Ascending aorta (tissue), 2 donors: ENCODE measurements at regions of chr7 and their contacts with region 1.

Region 1: DNA sequence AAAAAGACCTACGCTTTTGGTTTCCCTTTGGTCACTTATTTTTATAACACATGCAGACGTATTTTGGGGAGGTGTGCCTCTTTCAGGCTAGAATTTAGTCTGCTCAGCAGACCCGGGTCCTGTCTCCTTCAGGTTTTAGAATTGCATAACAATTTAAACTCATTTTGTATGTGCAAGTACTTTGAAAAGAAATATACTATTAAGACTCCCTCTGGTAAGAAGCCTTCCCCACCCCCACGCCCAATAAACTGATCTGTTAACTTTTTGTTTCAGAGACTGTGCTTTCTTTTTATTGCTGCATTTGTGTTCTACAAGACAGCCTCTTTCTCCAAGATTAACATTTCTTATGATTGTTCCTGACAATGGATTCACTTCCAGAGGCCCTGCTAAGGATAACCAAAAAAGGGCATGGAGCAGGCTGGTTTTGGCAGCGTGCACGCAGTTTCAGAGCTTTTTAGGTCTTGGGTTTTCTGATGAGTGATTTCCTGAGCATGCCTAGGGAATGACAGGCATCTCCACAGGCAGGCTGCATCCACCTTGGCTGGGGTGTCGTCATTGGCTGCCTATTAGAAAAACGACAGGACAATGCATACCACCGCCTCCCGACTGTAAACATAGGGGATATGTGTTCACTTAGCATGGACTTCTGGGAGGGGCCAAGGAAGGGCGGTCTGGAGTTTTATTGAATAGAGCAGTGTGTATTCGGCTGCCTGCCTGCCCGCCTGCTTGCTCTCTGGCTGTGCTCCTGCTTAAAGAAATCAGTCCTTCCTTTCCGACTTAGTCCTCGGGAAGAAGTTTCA is at the start of gene CALD1:
- DNase-seq: peak; percentile 74 to 97
- H3K4me3 ChIP-seq: peak within 1 kb of the TSS; percentile 69 to 73
- H3K27ac ChIP-seq: peak within 1 kb of the TSS; percentile 82 to 94
- H3K4me1 ChIP-seq: peaks cover 4 to 15% of the 10 kb centered on the region in 2 donors
- H3K27me3 ChIP-seq: no peaks in the 10 kb centered on the region
- CTCF ChIP-seq: no peak
- total RNA-seq, gene CALD1: 352 TPM

Region 2: DNA sequence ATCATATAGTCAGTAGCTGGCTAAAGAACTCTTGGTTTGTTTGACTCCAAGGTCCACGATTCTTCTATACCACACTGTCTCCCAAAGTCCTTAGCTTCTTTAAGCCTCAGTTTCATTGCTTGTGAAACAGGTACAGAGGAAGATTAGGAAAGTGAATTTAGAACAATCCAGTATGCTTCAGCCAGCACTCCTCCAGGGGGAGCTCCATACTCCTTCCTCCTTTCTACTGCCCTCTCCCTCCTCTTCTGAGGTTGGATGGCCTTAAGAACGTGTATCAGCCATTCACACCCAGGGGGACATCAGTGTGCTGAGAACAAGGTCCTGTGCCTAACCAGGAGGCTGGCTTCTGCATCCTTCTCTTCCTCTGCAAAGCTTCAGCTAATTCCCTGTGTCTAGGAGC is 54.5 kb before region 1 on chr7:
- intact Hi-C with region 1: loop called (anchors 5 kb)
- DNase-seq: no peak
- H3K4me3 ChIP-seq: no peak overlapping the region
- H3K27ac ChIP-seq: peak overlapping the region; percentile 24 to 71
- H3K4me1 ChIP-seq: peaks cover 7 to 56% of the 10 kb centered on the region in 2 donors
- H3K27me3 ChIP-seq: no peaks in the 10 kb centered on the region
- CTCF ChIP-seq: peak; percentile 11 to 43 (median 13)

Region 3: GRCh38 chr7:134730411-134730829 is 48.7 kb before region 1 on chr7:
- intact Hi-C with region 1: loop called (anchors 2 kb)
- DNase-seq: no peak
- H3K4me3 ChIP-seq: peak overlapping the region in 1 of 2 donors; percentile 19
- H3K27ac ChIP-seq: peak overlapping the region; percentile 88 to 92
- H3K4me1 ChIP-seq: peaks cover 9 to 42% of the 10 kb centered on the region in 2 donors
- H3K27me3 ChIP-seq: no peaks in the 10 kb centered on the region
- CTCF ChIP-seq: no peak

Region 4: GRCh38 chr7:134811765-134812164 is 32.6 kb after region 1 on chr7:
- intact Hi-C with region 1: no loop called
- DNase-seq: no peak
- H3K4me3 ChIP-seq: no peak overlapping the region
- H3K27ac ChIP-seq: peak overlapping the region; percentile 76 to 79
- H3K4me1 ChIP-seq: peaks cover 24 to 78% of the 10 kb centered on the region in 2 donors
- H3K27me3 ChIP-seq: no peaks in the 10 kb centered on the region
- CTCF ChIP-seq: no peak

Region 5: DNA sequence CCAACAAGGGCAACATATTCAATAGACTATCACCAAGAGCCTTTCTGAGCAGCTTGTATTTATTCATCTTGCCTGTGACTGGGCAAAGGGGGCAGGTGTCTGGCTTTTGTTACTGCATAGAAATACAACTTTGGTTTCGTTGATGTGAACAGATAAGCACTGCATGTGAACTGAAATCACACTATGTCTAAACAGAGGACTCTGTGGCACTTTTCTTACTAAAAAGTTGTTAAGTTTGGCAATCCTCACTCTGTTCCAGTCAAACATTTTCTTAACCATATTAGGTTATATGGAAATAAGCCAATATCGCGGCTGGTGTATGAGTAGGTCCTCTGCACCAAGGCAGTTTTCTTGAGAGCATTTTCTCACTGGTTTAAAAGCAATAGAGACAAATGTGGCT is 48.7 kb after region 1 on chr7:
- intact Hi-C with region 1: loop called (anchors 2 kb)
- DNase-seq: peak in 1 of 2 donors; percentile 77
- H3K4me3 ChIP-seq: peak overlapping the region in 1 of 2 donors; percentile 14
- H3K27ac ChIP-seq: peak overlapping the region; percentile 89
- H3K4me1 ChIP-seq: peaks cover 12 to 79% of the 10 kb centered on the region in 2 donors
- H3K27me3 ChIP-seq: no peaks in the 10 kb centered on the region
- CTCF ChIP-seq: no peak

Region 6: GRCh38 chr7:134865001-134865845 is 86.1 kb after region 1 on chr7:
- intact Hi-C with region 1: loop called (anchors 5 kb)
- DNase-seq: no peak
- H3K4me3 ChIP-seq: peak overlapping the region; percentile 32 to 50
- H3K27ac ChIP-seq: peak overlapping the region; percentile 70 to 74
- H3K4me1 ChIP-seq: peaks cover 15 to 56% of the 10 kb centered on the region in 2 donors
- H3K27me3 ChIP-seq: no peaks in the 10 kb centered on the region
- CTCF ChIP-seq: no peak

Region 7: DNA sequence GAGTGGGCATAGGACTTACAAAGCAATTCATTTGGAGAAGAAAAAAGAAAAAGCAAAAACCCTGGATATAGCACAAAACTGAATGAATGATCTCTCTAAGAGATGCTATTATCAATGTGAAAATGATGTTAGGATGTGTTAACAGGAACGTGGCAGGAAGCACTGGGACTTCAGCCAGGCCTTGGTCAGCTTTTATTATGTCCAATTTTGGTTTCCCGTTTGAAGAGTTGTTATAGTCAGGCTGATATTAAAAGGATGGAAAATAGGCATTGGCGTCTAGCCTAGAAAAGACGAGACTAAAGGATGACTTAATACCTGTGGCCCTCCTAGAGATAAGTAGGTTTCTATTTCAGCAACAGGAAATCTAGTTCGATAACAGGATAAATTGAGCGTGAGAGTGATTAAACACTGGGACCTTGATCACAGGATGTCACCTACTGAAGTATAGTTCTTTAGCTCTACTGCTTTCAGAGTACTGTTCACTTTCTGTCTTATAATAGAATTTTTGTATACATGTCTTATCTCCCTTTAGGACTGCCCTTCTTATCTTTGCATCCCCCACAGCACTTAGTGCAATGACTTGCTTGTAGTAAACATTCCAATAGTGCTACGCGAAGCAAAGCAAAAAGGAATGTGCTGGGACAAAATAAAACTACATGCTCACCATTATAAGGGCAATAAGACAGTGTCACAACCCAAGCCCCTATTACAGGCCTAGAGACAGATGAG is 107.4 kb after region 1 on chr7:
- intact Hi-C with region 1: no loop called
- DNase-seq: no peak
- H3K4me3 ChIP-seq: peak overlapping the region; percentile 13 to 19
- H3K27ac ChIP-seq: peak overlapping the region; percentile 71
- H3K4me1 ChIP-seq: peaks cover 16 to 56% of the 10 kb centered on the region in 2 donors
- H3K27me3 ChIP-seq: no peaks in the 10 kb centered on the region
- CTCF ChIP-seq: no peak

Region 8: DNA sequence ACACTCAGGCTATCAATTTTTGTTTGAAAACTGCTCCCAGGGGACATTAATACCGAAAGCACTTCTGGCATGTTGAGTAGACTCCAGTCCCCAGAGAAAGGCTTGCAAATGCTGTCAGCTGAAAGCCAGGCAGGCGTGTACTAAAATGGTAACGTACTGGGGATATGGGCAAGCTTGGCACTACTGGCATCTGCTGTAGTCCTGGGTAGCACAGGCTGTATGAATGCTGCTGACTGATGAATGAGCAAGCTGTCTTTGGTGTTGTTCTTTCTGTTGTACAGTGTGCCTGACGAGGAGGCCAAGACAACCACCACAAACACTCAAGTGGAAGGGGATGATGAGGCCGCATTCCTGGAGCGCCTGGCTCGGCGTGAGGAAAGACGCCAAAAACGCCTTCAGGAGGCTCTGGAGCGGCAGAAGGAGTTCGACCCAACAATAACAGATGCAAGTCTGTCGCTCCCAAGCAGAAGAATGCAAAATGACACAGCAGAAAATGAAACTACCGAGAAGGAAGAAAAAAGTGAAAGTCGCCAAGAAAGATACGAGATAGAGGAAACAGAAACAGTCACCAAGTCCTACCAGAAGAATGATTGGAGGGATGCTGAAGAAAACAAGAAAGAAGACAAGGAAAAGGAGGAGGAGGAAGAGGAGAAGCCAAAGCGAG is 153.7 kb after region 1 on chr7:
- intact Hi-C with region 1: loop called (anchors 2 kb)
- DNase-seq: peak; percentile 23 to 91
- H3K4me3 ChIP-seq: peak overlapping the region; percentile 7 to 28
- H3K27ac ChIP-seq: peak overlapping the region; percentile 74 to 90
- H3K4me1 ChIP-seq: peaks cover 32 to 49% of the 10 kb centered on the region in 2 donors
- H3K27me3 ChIP-seq: no peaks in the 10 kb centered on the region
- CTCF ChIP-seq: no peak

Region 9: DNA sequence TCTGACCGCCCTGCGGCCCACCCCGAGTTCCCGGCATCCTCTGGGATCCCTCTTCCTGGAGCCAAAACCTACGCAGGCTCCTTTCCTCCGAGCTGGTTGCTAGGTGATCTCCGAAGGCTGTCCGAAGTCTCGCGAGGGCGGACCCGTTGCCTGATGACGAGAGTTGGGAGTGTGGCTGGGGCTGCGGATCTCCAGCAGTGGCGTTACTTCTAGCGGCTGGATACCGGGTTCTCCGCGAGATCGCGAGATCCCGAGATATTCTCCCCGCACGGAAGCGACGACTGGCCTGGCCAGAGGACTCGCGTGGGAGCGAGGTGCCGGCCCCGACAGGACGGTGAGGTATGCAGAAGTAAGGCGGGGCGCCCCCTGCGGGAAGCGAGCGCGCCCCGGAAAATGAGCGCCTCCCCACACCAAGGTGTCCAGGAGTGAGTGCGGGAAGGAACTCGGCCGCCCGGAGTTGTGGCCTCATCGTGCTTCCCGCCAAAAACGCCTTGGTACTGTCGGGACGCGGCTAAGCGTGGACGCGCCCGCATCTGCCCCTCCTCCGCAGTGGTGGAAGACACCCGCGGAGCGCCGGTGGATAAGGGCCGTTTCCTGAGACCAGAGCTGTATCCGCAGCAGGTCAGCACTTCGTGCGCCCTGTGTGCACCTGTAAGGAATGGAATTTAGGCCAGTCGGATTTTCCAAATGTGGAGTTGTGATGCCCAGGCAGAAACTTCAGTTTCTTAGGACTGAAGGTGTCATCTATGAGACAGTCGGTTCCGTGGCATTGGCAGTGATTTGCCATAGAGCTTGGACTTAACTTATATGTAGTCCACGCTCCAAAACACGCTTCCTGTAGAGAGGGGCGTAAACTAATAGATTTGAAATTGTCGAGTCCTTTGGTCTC is 207.5 kb after region 1 on chr7 and contains the start of gene AGBL3:
- intact Hi-C with region 1: loop called (anchors 5 kb)
- DNase-seq: peak; percentile 89 to 99
- H3K4me3 ChIP-seq: peak within 1 kb of the TSS; percentile 72 to 73
- H3K27ac ChIP-seq: peak within 1 kb of the TSS; percentile 86 to 87
- H3K4me1 ChIP-seq: peaks cover 0 to 18% of the 10 kb centered on the region in 2 donors
- H3K27me3 ChIP-seq: no peaks in the 10 kb centered on the region
- CTCF ChIP-seq: peak; percentile 51 to 74 (median 67)
- total RNA-seq, gene AGBL3: 2.8 TPM

Region 10: DNA sequence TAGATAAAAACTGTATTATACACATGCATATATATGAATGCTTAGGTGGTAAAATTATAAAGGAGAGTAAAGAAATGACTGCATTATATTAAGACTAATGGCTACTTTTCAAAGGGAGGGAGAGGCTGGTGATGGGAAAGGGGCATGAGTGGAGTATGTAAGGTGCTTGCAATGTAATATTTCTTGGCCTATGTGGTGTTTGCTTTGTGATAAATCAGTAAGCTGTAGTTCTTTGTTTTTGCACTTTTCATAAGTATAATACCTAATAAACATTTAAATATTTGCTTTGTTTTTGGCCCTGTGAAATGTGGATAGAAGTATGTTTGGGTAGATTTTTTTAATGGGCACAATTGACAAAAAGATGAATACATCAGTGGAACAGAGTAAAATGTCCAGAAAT is 233.1 kb after region 1 on chr7:
- intact Hi-C with region 1: no loop called
- DNase-seq: no peak
- H3K4me3 ChIP-seq: no peak overlapping the region
- H3K27ac ChIP-seq: no peak overlapping the region
- H3K4me1 ChIP-seq: no peaks in the 10 kb centered on the region
- H3K27me3 ChIP-seq: no peaks in the 10 kb centered on the region
- CTCF ChIP-seq: no peak